GM10248 (cell line): ENCODE measurements at regions of chr10 and their contacts with region 1.

Region 1: GRCh38 chr10:98433881-98434732 is 12.6 kb downstream of the HPS1 start:
- DNase-seq: no peak
- CTCF ChIP-seq: no peak

Region 2: DNA sequence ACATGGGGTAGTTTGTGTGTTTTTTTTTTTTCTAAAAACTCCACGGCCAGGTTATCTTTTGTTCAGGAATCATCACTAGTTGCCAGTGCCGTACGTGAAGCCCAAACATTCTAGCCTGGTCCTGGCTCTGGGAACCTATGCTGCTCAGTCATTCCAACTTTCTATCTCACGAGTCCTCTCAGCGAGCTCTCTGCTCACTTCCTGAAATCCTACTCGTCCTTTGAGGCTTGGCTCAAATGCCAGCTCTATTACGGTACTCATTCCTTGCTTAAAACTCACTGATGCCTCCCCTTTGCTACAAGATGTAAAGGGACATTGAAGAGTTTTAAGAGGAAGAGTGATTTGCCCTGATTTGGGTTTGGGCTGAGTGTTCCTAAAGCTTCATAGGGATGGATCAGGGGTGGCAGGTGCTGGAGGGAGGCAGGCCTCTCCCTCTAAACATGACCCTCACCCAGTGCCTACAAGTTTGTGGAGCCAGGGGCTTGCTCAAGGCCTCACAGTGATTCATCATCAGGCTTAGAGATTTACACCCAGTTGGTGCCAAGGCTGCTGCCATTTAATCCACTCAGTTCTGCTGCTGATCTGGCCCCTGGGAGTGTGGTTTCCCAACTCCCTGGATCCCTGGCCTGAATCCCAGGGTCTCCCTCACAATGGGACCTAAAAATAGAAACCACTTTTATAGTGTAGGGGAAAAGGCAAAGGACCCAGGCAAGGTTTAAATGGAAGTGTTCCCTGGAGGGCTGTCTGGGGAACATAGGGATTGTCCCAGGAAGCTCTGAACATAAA is 345.7 kb before region 1 on chr10:
- CTCF ChIA-PET with region 1: no interaction called
- POLR2A ChIA-PET with region 1: no interaction called
- DNase-seq: no peak
- CTCF ChIP-seq: no peak

Region 3: GRCh38 chr10:98446661-98447221 is 12.6 kb after region 1 on chr10 and contains the start of gene HPS1:
- CTCF ChIA-PET with region 1: interaction called, 10 read pairs
- POLR2A ChIA-PET with region 1: no interaction called
- DNase-seq: peak; percentile 95
- CTCF ChIP-seq: no peak

Region 4: DNA sequence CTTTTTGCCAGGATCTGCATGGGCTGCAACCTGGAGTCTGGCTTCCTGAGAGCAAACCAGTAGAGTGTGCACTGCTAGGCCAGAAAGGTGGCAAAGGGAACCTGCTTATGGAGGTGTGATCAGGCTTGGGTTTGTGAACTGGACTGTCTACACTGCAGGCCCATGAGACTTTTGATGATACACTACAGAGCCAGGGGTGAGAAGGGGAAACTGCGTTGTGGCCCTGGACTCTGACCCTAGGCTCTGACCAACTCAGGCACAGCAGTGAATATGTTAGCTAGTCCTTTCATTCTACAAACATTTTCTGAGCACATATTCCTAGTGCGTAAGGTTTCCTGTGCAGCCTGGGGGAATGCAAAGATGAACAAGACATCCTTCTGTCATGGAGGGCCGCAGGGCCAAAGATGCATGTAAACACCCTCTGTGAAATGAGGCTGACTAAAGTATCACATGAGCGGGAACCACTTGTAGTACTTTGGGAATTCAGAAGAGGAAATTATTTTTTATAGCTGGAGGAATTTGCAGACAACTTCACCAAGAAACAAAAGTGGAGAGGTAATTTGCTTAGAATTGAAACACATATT is 76.4 kb after region 1 on chr10:
- CTCF ChIA-PET with region 1: no interaction called
- POLR2A ChIA-PET with region 1: no interaction called
- DNase-seq: no peak
- CTCF ChIP-seq: no peak